Left ventricle myocardium superior (tissue), 1 donor: ENCODE measurements at regions of chr21 and their contacts with region 1.

Region 1: GRCh38 chr21:38048167-38048566 is 131.9 kb upstream of the KCNJ6 start:
- DNase-seq: no peak
- ATAC-seq: no peak

Region 2: DNA sequence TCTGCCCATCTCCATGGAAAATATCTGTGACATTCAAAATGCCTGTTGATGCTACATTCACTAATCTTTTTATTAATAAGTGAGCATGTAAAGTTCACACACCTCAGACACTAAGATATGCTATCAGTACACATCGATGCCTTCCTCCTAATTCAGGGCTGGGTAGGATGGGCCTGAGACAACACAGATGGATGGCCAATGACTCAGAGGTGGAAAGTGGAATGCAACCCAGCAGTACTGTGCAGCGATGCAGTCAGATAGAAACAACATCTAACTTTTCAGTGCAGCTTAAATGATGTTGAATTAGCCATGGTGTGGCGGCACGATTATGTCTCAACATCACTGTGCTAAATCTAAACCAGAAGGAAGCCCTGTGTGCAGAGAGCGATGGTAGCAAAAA is 47.1 kb after region 1 on chr21:
- intact Hi-C with region 1: loop called (anchors 10 kb)
- DNase-seq: no peak
- ATAC-seq: no peak